Activated CD4-positive, alpha-beta T cell treated with anti-CD3 and anti-CD28 coated beads, Interleukin-2, amount 10 ng/mL, durations not matched to agents 24 days and 14 days (primary cell): ENCODE measurements at regions of chr3 and their contacts with region 1.

Region 1: DNA sequence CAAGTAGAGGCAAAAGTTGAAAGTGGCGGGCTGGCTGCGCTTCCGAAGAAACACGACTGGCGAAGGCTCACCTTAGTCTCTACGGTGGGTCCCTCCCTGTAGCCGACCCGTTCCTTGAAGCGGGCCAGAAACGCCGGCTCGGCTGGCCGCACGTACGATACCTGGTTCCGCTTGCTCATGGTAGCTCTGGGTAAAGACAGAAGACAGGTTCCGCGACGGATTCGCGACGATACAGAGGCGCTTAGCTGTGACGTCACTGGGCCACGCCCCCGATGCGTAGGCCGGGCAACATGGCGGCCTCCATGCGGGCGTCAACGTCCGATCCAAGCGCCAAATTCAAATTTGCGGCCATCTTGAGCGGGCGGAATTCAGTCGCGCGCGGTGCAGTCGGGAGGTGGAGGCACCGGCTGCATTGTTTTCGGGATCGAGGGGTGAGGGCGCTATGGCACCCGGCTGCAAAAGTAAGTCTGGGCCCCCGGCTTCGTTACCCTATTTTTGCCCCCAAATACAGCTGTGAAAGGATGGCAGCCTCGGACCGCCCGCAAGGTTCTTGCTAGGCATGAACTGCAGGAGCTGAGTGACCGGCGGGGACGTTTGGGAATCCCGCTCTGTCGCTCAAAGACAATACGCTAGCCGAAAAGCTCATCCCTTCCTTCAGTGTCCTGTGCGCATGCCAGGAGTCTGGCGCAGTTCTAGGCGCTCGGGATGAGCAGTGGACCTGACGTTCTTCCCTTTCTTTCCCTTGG is at the starts of genes KIAA1143 and KIF15:
- DNase-seq: peak; percentile 99
- H3K4me3 Mint-ChIP-seq: peak within 1 kb of the TSS; percentile 97
- H3K27ac Mint-ChIP-seq: peak within 1 kb of the TSS; percentile 85
- H3K4me1 Mint-ChIP-seq: peaks cover 34% of the 10 kb centered on the region
- H3K27me3 Mint-ChIP-seq: no peaks in the 10 kb centered on the region
- total RNA-seq, gene KIAA1143: 40.7 and 47.4 TPM in 2 replicates
- total RNA-seq, gene KIF15: 26.5 and 28.3 TPM in 2 replicates

Region 2: GRCh38 chr3:43621656-43622432 is 1139.8 kb before region 1 on chr3 and contains the start of gene ANO10:
- intact Hi-C with region 1: loop called (anchors 5 kb)
- DNase-seq: peak; percentile 98
- H3K4me3 Mint-ChIP-seq: peak within 1 kb of the TSS; percentile 95
- H3K27ac Mint-ChIP-seq: peak within 1 kb of the TSS; percentile 89
- H3K4me1 Mint-ChIP-seq: peaks cover 21% of the 10 kb centered on the region
- H3K27me3 Mint-ChIP-seq: peaks cover 16% of the 10 kb centered on the region
- total RNA-seq, gene ANO10: 3.5 and 6.0 TPM in 2 replicates

Region 3: GRCh38 chr3:44338010-44338827 is 423.4 kb before region 1 on chr3 and contains the start of gene TCAIM:
- intact Hi-C with region 1: loop called (anchors 1 kb)
- DNase-seq: peak; percentile 99
- H3K4me3 Mint-ChIP-seq: peak within 1 kb of the TSS; percentile 100
- H3K27ac Mint-ChIP-seq: peak within 1 kb of the TSS; percentile 98
- H3K4me1 Mint-ChIP-seq: peaks cover 19% of the 10 kb centered on the region
- H3K27me3 Mint-ChIP-seq: peaks cover 10% of the 10 kb centered on the region
- total RNA-seq, gene TCAIM: 14.3 and 14.6 TPM in 2 replicates

Region 4: GRCh38 chr3:44624749-44625480 is 136.7 kb before region 1 on chr3 and contains the start of gene ZNF197:
- intact Hi-C with region 1: loop called (anchors 1 kb)
- DNase-seq: peak; percentile 88
- H3K4me3 Mint-ChIP-seq: peak within 1 kb of the TSS; percentile 90
- H3K27ac Mint-ChIP-seq: peak within 1 kb of the TSS; percentile 81
- H3K4me1 Mint-ChIP-seq: peaks cover 14% of the 10 kb centered on the region
- H3K27me3 Mint-ChIP-seq: no peaks in the 10 kb centered on the region
- total RNA-seq, gene ZNF197: 10.5 and 10.7 TPM in 2 replicates

Region 5: GRCh38 chr3:44803298-44803697 is 41.7 kb after region 1 on chr3:
- intact Hi-C with region 1: no loop called
- DNase-seq: no peak
- H3K4me3 Mint-ChIP-seq: no peak overlapping the region
- H3K27ac Mint-ChIP-seq: no peak overlapping the region
- H3K4me1 Mint-ChIP-seq: no peaks in the 10 kb centered on the region
- H3K27me3 Mint-ChIP-seq: no peaks in the 10 kb centered on the region

Region 6: GRCh38 chr3:44861412-44862220 is 100.0 kb after region 1 on chr3 and contains the start of gene TMEM42:
- intact Hi-C with region 1: loop called (anchors 1 kb)
- DNase-seq: peak; percentile 97
- H3K4me3 Mint-ChIP-seq: peak within 1 kb of the TSS; percentile 90
- H3K27ac Mint-ChIP-seq: peak within 1 kb of the TSS; percentile 91
- H3K4me1 Mint-ChIP-seq: peaks cover 32% of the 10 kb centered on the region
- H3K27me3 Mint-ChIP-seq: no peaks in the 10 kb centered on the region
- total RNA-seq, gene TMEM42: 11.6 and 13.0 TPM in 2 replicates